ENCODE measurements at regions of chr19 and their contacts with region 1.

Region 1: DNA sequence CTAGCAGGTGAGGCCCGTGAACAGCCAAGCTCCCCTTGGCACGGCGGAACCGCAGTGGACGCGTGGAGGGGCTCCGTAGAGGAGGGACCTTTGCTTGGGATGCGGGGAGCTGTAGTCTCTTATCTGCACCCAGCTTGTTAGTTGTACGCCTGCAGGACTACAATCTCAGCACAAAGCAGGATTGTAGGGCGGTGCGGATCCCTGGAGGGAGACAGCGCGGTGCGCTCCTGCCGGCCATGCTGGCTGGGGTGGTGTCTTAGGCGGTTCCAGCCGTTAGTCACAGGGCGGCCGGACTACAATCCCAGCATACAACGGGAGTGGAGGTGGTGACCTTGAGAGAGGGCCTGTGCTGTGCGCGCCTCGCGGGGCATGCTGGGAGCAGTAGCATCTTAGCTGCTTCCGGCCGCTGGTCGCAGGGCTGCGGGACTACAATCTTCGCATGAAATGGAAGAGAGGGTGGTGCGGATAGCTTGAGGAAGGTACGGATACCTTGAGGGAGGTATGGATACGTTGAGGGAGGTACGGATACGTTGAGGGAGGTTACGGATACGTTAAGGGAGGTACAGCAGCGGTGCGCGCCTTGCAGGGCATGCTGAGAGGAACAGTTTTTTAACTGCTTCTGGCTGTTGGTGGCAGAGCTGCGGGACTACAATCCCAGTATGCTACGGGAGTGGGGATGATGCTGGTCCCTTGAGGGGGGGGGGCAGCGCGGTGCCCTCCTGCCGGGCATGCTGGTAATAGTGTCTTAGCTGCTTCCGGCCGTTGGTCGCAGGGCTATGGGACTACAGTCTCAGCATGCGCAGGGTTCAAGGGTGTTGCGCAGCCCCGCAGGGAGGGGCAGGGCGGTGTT is 1419.1 kb downstream of the UQCRFS1 start:
- DNase-seq: peak; percentile 95
- H3K4me3 ChIP-seq: peak overlapping the region; percentile 84
- H3K27ac ChIP-seq: peak overlapping the region; percentile 82
- H3K4me1 ChIP-seq: peaks cover 12% of the 10 kb centered on the region
- CTCF ChIP-seq: no peak

Region 2: GRCh38 chr19:27635401-27635800 is 158.5 kb before region 1 on chr19:
- CTCF ChIA-PET with region 1: no interaction called
- POLR2A ChIA-PET with region 1: no interaction called
- intact Hi-C with region 1: no loop called
- DNase-seq: no peak
- H3K4me3 ChIP-seq: no peak overlapping the region
- H3K27ac ChIP-seq: no peak overlapping the region
- H3K4me1 ChIP-seq: no peaks in the 10 kb centered on the region
- CTCF ChIP-seq: no peak

Region 3: DNA sequence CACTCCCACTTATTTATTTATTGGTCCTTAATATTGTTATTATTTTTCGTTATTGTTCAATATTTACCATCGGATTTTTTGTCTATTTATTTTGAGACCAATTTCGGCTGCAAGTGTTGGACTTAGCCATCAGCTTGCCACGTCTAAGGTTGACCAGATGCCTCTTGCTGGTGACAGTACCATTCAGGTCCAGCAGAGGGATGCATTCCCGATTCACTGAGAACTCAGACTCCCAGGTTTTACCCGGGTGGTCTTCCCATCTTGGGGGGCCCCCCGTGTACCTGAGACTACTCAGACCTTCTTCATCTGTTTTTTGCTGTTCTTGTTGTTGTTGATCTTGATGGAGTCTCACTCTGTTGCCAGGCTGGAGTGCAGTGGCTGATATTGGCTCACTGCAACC is 16.1 kb before region 1 on chr19:
- CTCF ChIA-PET with region 1: no interaction called
- POLR2A ChIA-PET with region 1: interaction called, 12 read pairs
- intact Hi-C with region 1: no loop called
- DNase-seq: peak; percentile 25
- H3K4me3 ChIP-seq: no peak overlapping the region
- H3K27ac ChIP-seq: no peak overlapping the region
- H3K4me1 ChIP-seq: peaks cover 13% of the 10 kb centered on the region
- CTCF ChIP-seq: peak; percentile 56

Measured in OCI-LY7 (cell line).